Right cardiac atrium (tissue), 5 donors: ENCODE measurements at regions of chr18 and their contacts with region 1.

Region 1: DNA sequence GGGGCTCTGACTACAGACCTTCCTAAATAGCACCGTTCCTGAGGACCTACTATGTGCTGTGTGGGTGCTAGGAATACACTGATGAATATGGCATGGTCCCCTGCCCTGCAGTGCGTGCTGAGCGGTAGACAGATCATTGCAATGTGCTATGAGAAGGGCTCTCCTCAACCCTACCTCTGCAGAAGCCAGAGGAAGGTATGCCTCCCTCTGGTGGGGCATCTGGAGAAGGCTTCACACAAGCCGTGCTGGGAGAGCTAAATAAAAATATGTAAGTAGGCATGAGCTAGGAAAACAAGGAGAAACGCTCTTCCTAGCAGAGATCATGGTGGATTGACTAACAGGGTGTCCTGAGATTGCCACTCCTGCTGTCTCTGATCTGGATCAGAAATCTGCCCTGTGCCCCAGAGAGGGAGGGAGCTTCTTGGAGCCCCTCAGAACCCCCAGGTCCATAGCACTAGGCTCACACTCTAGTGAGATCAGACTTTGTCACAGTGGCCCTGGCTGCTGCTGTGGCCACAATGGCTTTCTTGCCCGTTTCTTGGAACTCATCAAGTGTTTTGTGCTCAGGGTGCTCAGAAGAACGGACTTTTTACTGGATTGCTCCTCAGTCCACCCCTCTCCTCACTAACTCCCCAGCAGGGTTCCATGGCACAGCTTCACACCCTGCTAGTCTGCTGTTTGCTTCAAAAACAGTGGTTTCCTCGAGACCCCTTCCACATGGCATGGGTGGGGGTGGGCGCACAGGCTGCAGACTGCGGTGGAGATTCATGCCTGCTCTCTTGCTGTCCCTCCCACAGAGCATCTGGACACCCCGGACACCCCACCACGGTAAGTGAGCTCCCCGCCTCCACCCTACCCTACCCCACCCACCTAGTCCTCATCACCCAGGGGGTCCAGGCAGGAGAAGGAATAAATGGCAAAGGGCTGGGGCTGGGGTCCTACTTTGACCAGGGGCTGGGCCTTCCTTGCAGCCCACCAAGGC is 14.2 kb downstream of the SIGLEC15 start:
- DNase-seq: no peak
- ATAC-seq: peak; percentile 58 to 71
- H3K4me3 ChIP-seq: no peak overlapping the region
- H3K27ac ChIP-seq: no peak overlapping the region
- H3K4me1 ChIP-seq: peaks cover 2% of the 10 kb centered on the region
- H3K27me3 ChIP-seq: no peaks in the 10 kb centered on the region

Region 2: DNA sequence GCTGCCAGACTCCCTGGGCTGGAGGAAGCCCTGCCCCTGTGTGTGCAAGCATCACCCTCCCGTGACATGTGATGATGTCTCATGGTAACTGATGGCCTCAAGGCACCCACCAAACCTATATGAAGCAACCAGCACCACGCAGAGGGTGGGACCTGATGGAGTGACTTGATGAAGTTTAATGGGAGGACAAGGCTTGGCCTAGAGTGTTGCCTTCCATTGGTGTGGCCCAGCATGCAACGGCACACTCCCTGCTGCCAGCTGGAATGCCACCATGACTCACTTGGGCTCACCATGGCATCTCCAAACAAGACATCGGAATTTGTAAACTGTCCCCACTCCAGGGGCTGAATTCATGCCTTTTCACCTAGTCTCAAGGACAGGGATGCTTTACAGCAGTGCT is 124.4 kb before region 1 on chr18:
- intact Hi-C with region 1: loop called in 3 of 4 experiments (anchors 5 to 10 kb)
- DNase-seq: no peak
- ATAC-seq: no peak
- H3K4me3 ChIP-seq: no peak overlapping the region
- H3K27ac ChIP-seq: no peak overlapping the region
- H3K4me1 ChIP-seq: no peaks in the 10 kb centered on the region
- H3K27me3 ChIP-seq: no peaks in the 10 kb centered on the region

Region 3: DNA sequence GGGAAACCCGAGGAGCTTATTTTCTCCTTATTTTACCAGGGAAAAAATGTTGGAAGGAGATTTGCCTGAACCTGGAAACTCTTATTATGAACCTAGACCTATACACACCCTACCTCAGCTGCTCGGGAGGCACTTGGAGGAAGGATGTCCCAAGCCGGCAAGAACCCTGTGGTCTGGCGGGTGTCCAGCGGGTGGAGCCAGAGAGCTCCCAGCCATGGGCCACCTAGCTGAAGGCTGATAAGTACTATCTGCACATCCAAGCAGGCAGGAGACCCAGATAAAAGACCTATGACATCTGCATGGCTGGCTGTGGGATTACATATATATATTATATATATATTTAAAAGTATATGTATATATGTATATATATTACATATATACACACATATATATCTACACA is 116.8 kb before region 1 on chr18:
- intact Hi-C with region 1: loop called in 3 of 4 experiments (anchors 5 to 10 kb)
- DNase-seq: peak; percentile 68 to 91 (median 86)
- ATAC-seq: peak in 1 of 2 donors; percentile 83
- H3K4me3 ChIP-seq: no peak overlapping the region
- H3K27ac ChIP-seq: no peak overlapping the region
- H3K4me1 ChIP-seq: no peaks in the 10 kb centered on the region
- H3K27me3 ChIP-seq: no peaks in the 10 kb centered on the region